ENCODE measurements at regions of chr19 and their contacts with region 1.

Region 1: GRCh38 chr19:46030812-46031550 is 8.1 kb upstream of the PGLYRP1 start:
- DNase-seq: no peak
- H3K4me3 ChIP-seq: no peak overlapping the region
- H3K27ac ChIP-seq: no peak overlapping the region
- H3K4me1 ChIP-seq: peaks cover 0 to 30% (median 6%) of the 10 kb centered on the region in 6 donors
- H3K27me3 ChIP-seq: peaks cover 0 to 71% (median 0%) of the 10 kb centered on the region in 7 donors
- CTCF ChIP-seq: no peak
- POLR2A ChIP-seq: no peak

Region 2: DNA sequence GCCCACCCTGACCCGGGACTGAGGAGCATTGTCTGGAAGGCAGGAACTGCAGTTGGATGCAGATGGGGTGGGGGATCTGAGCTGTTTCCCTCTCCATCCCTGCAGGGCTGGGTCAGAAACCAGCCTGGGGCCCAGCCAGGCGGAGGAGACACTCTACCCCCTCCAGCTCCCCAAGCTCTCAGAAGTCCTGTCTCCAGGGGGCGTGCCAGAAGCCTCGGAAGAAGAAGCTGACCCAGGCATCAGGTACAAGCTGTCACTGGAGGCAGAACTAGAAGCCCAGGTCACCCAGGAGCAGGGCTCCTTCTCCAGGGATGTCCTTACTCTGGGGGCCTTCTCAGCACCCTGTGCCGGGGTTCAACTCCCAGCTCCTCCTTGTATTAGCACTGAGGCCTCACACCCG is 277.4 kb before region 1 on chr19:
- intact Hi-C with region 1: no loop called
- DNase-seq: no peak
- H3K4me3 ChIP-seq: no peak overlapping the region
- H3K27ac ChIP-seq: no peak overlapping the region
- H3K4me1 ChIP-seq: no peaks in the 10 kb centered on the region
- H3K27me3 ChIP-seq: peaks cover 0 to 5% (median 0%) of the 10 kb centered on the region in 7 donors
- CTCF ChIP-seq: no peak
- POLR2A ChIP-seq: no peak

Region 3: DNA sequence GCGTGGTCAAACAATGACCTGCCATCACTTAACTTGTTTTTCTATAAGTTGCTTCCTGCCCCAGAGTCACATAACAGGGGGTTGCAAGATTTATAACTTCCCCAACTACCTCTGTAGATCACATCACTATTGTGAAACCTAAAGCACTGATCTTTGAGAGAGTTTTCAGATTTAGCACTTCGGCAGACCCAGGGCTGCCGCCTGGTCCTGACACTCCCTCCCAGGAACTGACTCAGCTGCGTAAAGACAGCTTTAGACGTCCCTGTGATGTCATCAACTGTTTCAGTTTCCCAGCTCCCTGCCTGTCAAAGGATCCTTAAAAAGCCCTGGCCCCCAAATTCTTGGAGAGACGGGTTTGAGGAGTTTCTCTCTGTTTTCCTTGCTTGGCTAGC is 150.4 kb after region 1 on chr19:
- intact Hi-C with region 1: loop called (anchors 10 kb)
- DNase-seq: no peak
- H3K4me3 ChIP-seq: no peak overlapping the region
- H3K27ac ChIP-seq: no peak overlapping the region
- H3K4me1 ChIP-seq: peaks cover 0 to 13% (median 0%) of the 10 kb centered on the region in 6 donors
- H3K27me3 ChIP-seq: peaks cover 0 to 34% (median 0%) of the 10 kb centered on the region in 7 donors
- CTCF ChIP-seq: no peak
- POLR2A ChIP-seq: no peak

Region 4: DNA sequence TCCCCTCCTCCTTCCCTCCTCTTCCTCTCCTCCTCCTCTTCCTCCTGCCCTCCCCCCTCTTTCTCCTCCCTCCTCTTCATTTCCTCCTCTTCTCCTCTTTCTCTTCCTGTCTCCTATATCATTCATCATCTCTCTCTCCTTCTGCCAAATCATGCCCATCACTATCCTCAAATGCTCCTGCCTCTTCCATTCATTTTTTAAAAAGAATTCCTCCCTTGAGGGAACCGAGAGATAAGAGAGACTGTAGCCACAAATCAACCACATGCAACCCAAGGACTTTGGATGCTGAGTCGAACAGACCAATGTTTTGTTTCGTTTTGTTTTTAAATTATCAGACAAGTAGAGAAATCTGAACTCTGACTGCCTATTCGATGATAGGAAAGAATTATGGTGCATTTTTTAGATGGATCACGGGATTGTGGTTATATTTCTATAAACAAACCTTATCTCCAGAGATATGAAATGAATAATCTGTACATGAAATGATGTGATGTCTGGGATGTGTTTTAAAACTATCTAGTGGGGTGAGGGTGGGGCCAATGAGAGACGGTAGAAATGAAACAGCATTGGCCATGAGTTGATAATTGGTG is 1551.4 kb after region 1 on chr19:
- intact Hi-C with region 1: no loop called
- DNase-seq: no peak
- H3K4me3 ChIP-seq: no peak overlapping the region
- H3K27ac ChIP-seq: no peak overlapping the region
- H3K4me1 ChIP-seq: peaks cover 0 to 24% (median 10%) of the 10 kb centered on the region in 6 donors
- H3K27me3 ChIP-seq: peaks cover 0 to 70% (median 3%) of the 10 kb centered on the region in 7 donors
- CTCF ChIP-seq: no peak
- POLR2A ChIP-seq: no peak

Measured in spleen (tissue), 13 donors.